Vagina (tissue), 2 donors: ENCODE measurements at regions of chr7 and their contacts with region 1.

Region 1: DNA sequence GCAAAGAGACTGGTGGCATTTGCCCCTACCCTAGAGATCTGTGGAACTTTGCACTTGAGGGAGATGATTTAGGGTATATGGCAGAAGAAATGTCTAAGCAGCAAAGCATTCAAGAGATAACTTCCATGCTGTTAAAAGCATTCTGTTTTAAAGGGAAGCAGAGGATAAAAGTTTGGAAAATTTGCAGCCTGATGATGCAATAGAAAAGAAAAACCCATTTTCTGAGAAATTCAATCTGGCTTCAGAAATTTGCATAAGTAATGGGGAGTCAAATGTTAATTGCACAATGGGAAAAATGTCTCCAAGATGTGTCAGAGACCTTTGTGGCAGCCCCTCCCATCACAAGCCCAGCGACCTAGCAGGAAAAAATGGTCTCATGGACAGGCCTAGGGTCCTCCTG is 361.7 kb downstream of the ANKRD7 start:
- DNase-seq: no peak
- H3K4me3 ChIP-seq: no peak overlapping the region
- H3K27ac ChIP-seq: peak overlapping the region; percentile 24
- H3K4me1 ChIP-seq: no peaks in the 10 kb centered on the region
- H3K27me3 ChIP-seq: no peaks in the 10 kb centered on the region
- CTCF ChIP-seq: no peak
- POLR2A ChIP-seq: no peak

Region 2: GRCh38 chr7:120064565-120064964 is 1478.3 kb after region 1 on chr7:
- intact Hi-C with region 1: loop called (anchors 5 kb)
- DNase-seq: no peak
- H3K4me3 ChIP-seq: no peak overlapping the region
- H3K27ac ChIP-seq: no peak overlapping the region
- H3K4me1 ChIP-seq: no peaks in the 10 kb centered on the region
- H3K27me3 ChIP-seq: no peaks in the 10 kb centered on the region
- CTCF ChIP-seq: no peak
- POLR2A ChIP-seq: no peak